AG04450 (cell line): ENCODE measurements at regions of chr14 and their contacts with region 1.

Region 1: GRCh38 chr14:77498120-77498979 is at the start of gene ISM2:
- DNase-seq: no peak
- H3K4me3 ChIP-seq: peak within 1 kb of the TSS; percentile 56
- H3K27ac ChIP-seq: peak within 1 kb of the TSS; percentile 11
- H3K27me3 ChIP-seq: peaks cover 25% of the 10 kb centered on the region
- CTCF ChIP-seq: no peak
- polyA plus RNA-seq, gene ISM2: not detected in 2 replicates

Region 2: DNA sequence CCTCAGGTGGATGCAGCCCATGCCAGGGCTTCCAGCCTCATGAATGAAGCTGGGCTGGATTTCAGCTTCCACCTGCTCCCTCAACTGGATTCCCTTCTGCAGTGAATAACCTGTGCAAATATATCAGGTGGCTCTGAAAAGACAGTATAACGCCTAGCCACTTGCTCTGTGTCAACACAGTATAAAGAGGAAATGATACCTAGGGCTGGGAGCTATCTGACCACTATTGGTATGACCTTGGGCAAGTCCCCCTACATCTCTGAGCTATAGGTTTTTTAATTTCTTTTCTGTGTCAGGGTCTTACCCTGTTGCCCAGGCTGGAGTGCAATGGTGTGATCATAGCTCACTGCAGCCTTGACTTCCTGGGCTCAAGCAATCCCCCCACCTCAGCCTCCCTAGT is 19.6 kb before region 1 on chr14:
- CTCF ChIA-PET with region 1: no interaction called
- POLR2A ChIA-PET with region 1: interaction called, 10 read pairs
- DNase-seq: no peak
- H3K4me3 ChIP-seq: no peak overlapping the region
- H3K27ac ChIP-seq: no peak overlapping the region
- H3K27me3 ChIP-seq: peaks cover 25% of the 10 kb centered on the region
- CTCF ChIP-seq: no peak

Region 3: GRCh38 chr14:77554207-77554606 is 55.9 kb after region 1 on chr14:
- CTCF ChIA-PET with region 1: no interaction called
- POLR2A ChIA-PET with region 1: no interaction called
- DNase-seq: no peak
- H3K4me3 ChIP-seq: no peak overlapping the region
- H3K27ac ChIP-seq: no peak overlapping the region
- H3K27me3 ChIP-seq: no peaks in the 10 kb centered on the region
- CTCF ChIP-seq: no peak

Region 4: GRCh38 chr14:77616454-77617229 is 118.3 kb after region 1 on chr14 and contains the start of gene SPTLC2:
- CTCF ChIA-PET with region 1: no interaction called
- POLR2A ChIA-PET with region 1: no interaction called
- DNase-seq: peak; percentile 98
- H3K4me3 ChIP-seq: peak within 1 kb of the TSS; percentile 65
- H3K27ac ChIP-seq: peak within 1 kb of the TSS; percentile 40
- H3K27me3 ChIP-seq: no peaks in the 10 kb centered on the region
- CTCF ChIP-seq: no peak
- polyA plus RNA-seq, gene SPTLC2: 37.0 and 41.3 TPM in 2 replicates